Activated CD4-positive, alpha-beta T cell treated with anti-CD3 and anti-CD28 coated beads, Interleukin-2, amount 10 ng/mL, durations not matched to agents 24 days and 14 days (primary cell): ENCODE measurements at regions of chr17 and their contacts with region 1.

Region 1: DNA sequence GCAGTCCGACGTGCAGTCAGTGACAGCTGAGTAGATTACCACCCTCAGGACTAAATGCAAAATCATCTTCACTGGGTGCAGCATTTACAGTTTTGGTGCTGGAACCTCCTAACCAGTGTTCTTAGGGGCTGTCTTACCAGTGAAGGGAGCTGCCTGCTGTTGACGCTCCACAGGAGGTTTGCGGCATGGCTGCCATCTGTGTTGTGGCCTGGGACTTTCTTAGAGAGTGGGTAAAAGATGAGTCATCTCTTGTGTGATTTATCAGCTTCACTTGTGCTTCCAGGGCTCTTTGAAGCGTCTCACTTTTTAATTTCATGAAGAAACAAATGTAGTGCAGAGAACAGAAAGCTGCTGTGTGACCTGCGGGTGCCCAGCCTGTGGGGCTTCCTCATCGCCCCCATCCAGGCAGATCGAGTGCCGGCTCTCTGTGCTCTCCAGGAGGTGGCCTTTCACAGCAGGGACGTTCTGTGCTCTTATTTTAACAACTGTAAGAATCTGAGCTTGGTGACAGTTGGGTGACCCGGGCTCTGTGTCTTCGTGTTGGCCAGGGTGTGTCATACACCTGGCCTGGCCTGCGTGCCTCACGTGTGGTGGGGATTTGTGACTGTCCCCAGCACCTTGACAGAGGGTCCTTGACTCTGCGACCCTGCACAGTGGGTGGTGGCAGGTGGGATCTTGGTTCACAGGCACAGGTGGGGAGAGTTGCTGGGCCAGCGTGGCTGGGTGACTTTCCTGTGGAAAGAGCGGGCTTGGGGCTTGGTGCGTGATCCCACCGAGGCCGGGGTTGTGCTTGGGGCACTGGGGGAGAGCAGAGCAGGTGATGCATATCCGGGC is 24.3 kb upstream of the ZNF750 start:
- DNase-seq: peak; percentile 97
- H3K4me3 Mint-ChIP-seq: peak overlapping the region; percentile 85
- H3K27ac Mint-ChIP-seq: peak overlapping the region; percentile 96
- H3K4me1 Mint-ChIP-seq: peaks cover 65% of the 10 kb centered on the region
- H3K27me3 Mint-ChIP-seq: no peaks in the 10 kb centered on the region

Region 2: DNA sequence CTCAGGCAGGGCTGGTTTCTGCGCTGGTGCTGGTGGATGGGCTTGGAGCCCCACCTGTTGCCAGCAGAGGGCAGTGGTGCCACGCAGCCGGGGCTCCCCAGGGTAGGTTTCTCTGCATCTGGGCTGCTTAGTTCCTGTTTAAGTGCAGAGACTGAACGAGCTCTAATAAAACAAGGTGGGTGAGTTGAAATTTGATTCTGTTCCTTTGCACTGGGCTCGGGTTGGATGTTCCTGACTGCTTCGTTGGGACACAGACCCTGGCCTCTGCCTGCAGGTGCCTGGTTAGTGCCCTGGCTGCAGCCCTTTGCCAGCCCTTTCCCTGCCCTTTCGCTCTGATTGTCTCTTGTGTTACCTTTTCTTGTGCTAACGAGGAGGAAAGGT is 82.3 kb before region 1 on chr17:
- intact Hi-C with region 1: loop called (anchors 10 kb)
- DNase-seq: peak; percentile 96
- H3K4me3 Mint-ChIP-seq: no peak overlapping the region
- H3K27ac Mint-ChIP-seq: no peak overlapping the region
- H3K4me1 Mint-ChIP-seq: peaks cover 9% of the 10 kb centered on the region
- H3K27me3 Mint-ChIP-seq: no peaks in the 10 kb centered on the region

Region 3: DNA sequence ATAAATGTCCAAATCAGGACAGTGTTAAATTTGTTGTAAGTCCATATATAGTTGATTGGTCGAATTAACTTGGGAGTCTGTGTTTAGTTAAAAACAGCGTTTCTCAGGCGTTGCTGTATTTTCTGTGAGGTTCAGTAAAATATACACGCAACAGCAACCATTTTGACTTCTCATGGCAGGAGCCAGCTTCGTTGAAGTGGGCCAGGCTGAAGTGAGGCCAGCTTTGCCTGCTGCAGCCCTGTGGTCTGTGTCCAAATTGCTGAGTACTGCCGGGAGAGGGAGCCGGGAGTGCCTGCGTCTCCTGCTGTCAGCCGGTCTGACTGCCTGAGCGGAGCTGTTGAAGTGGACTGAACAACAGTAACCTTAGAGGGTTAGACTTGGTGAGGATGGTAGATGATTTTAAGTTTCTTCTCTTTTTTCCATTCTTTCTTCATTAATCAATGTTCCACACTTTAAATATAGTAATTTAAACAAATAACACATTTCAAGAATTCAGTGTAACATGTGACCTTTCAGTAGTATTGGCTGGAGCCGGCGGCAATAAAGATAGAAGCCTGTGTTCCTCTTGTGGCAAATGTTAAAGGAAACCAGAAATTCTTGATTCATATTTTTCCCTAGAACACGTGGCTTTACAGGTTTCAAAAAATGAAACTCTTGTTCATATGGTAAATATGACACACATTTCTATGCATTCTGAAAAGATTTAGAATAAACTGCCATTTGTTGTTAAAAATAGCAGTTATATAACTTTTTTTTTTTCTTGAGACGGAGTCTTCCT is 12.6 kb after region 1 on chr17:
- intact Hi-C with region 1: loop called (anchors 2 kb)
- DNase-seq: no peak
- H3K4me3 Mint-ChIP-seq: no peak overlapping the region
- H3K27ac Mint-ChIP-seq: peak overlapping the region; percentile 57
- H3K4me1 Mint-ChIP-seq: peaks cover 55% of the 10 kb centered on the region
- H3K27me3 Mint-ChIP-seq: no peaks in the 10 kb centered on the region

Region 4: DNA sequence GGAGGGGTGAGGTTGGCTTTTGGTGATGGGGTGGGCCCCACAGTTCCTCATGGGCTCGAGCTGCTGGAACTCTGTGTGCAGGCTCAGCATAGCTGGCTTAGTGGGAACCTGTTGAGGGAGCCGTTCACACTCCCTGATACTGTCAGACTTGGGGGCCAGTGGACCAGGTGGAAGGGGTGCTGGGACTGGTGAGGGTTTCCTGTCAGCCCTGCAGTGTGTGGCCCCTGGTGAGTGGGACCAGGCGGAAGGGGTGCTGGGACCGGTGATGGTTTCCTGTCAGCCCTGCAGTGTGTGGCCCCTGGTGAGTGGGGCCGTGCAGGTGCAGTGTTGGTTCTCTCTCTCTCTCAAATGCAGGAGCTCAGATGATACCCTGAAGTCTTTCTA is 20.8 kb after region 1 on chr17:
- intact Hi-C with region 1: loop called (anchors 2 kb)
- DNase-seq: peak; percentile 79
- H3K4me3 Mint-ChIP-seq: peak overlapping the region; percentile 76
- H3K27ac Mint-ChIP-seq: peak overlapping the region; percentile 89
- H3K4me1 Mint-ChIP-seq: peaks cover 72% of the 10 kb centered on the region
- H3K27me3 Mint-ChIP-seq: no peaks in the 10 kb centered on the region